ENCODE measurements at regions of chr1 and their contacts with region 1.

Region 1: GRCh38 chr1:226649780-226650179 is 89.3 kb downstream of the ITPKB start:
- DNase-seq: peak in 6 of 9 donors; percentile 48 to 58 (median 54)
- ATAC-seq: no peak
- H3K4me3 ChIP-seq: no peak overlapping the region
- H3K4me3 Mint-ChIP-seq: peak overlapping the region in 5 of 10 donors; percentile 15 to 50 (median 17)
- H3K27ac ChIP-seq: no peak overlapping the region
- H3K27ac Mint-ChIP-seq: no peak overlapping the region
- H3K4me1 ChIP-seq: peaks cover 23 to 51% of the 10 kb centered on the region in 2 donors
- H3K4me1 Mint-ChIP-seq: peaks cover 0 to 83% (median 63%) of the 10 kb centered on the region in 7 donors
- H3K27me3 ChIP-seq: no peaks in the 10 kb centered on the region
- H3K27me3 Mint-ChIP-seq: no peaks in the 10 kb centered on the region

Region 2: GRCh38 chr1:226428791-226429461 is 220.9 kb before region 1 on chr1:
- CTCF ChIA-PET with region 1: no interaction called
- POLR2A ChIA-PET with region 1: no interaction called
- intact Hi-C with region 1: no loop called
- DNase-seq: no peak
- ATAC-seq: no peak
- H3K4me3 ChIP-seq: no peak overlapping the region
- H3K4me3 Mint-ChIP-seq: peak overlapping the region in 1 of 10 donors; percentile 16
- H3K27ac ChIP-seq: no peak overlapping the region
- H3K27ac Mint-ChIP-seq: peak overlapping the region in 1 of 9 donors; percentile 33
- H3K4me1 ChIP-seq: peaks cover 11% of the 10 kb centered on the region in 2 donors
- H3K4me1 Mint-ChIP-seq: peaks cover 15 to 40% (median 21%) of the 10 kb centered on the region in 7 donors
- H3K27me3 ChIP-seq: no peaks in the 10 kb centered on the region
- H3K27me3 Mint-ChIP-seq: peaks cover 0 to 5% (median 0%) of the 10 kb centered on the region in 5 donors

Region 3: GRCh38 chr1:226702957-226703831 is 53.4 kb after region 1 on chr1:
- CTCF ChIA-PET with region 1: interaction called, 3 read pairs
- POLR2A ChIA-PET with region 1: interaction called, 7 read pairs
- intact Hi-C with region 1: loop called in 1 of 2 experiments (anchors 1 kb)
- DNase-seq: peak; percentile 79 to 93 (median 86)
- ATAC-seq: peak; percentile 92
- H3K4me3 ChIP-seq: peak overlapping the region; percentile 69
- H3K4me3 Mint-ChIP-seq: peak overlapping the region; percentile 81 to 92 (median 86)
- H3K27ac ChIP-seq: peak overlapping the region; percentile 93
- H3K27ac Mint-ChIP-seq: peak overlapping the region; percentile 89 to 99 (median 95)
- H3K4me1 ChIP-seq: peaks cover 42 to 85% of the 10 kb centered on the region in 2 donors
- H3K4me1 Mint-ChIP-seq: peaks cover 59 to 95% (median 81%) of the 10 kb centered on the region in 7 donors
- H3K27me3 ChIP-seq: no peaks in the 10 kb centered on the region
- H3K27me3 Mint-ChIP-seq: no peaks in the 10 kb centered on the region

Measured in naive thymus-derived CD4-positive, alpha-beta T cell (primary cell).